MCF 10A (cell line): ENCODE measurements at regions of chr14 and their contacts with region 1.

Region 1: DNA sequence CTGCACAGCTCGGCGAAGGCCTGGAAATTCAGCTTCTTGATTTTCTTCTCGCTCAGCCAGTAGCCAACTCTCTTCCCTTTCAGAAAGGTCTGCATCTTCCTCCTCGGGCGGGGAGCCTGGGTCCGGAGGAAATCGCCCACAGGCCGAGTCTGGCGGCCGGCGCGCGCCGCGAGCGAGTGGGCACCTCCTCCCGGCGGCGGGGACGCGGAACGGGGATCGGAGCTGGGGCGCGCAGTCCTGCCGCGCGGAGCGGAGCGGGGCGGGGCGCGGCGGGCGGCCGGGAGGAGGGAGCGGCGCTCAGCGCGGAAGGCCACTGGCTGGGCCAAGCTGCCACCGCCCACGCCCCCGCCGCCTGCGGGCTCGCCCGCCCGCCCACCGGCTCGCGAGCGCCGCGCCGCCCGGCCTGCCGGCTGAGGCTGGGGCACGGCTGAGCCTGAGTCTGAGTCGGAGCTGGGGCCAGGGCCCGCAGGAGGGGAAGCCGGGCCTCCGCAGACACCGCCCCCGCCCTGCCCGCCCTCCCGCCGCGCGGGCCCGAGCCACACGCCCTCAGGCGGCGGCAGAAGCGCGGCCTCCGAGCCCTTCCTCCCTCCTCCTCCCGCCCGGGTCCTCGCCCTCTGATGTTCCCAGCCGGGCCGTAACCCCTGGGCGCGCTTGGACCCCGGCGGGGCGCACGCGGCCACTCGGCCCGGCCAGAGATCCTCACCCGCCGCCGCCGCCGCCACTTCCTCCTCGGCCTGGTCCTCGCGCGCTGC is 480 bp downstream of the ITPK1 start:
- DNase-seq: peak; percentile 82
- H3K4me3 Mint-ChIP-seq: peak overlapping the region; percentile 84
- H3K27ac Mint-ChIP-seq: no peak overlapping the region
- H3K4me1 Mint-ChIP-seq: peaks cover 19% of the 10 kb centered on the region
- H3K27me3 Mint-ChIP-seq: no peaks in the 10 kb centered on the region
- CTCF ChIP-seq: no peak

Region 2: GRCh38 chr14:92951912-92952471 is 163.3 kb before region 1 on chr14:
- CTCF ChIA-PET with region 1: interaction called, 74 read pairs
- POLR2A ChIA-PET with region 1: interaction called, 4 read pairs
- intact Hi-C with region 1: loop called (anchors 1 kb)
- DNase-seq: peak; percentile 62
- H3K4me3 Mint-ChIP-seq: no peak overlapping the region
- H3K27ac Mint-ChIP-seq: no peak overlapping the region
- H3K4me1 Mint-ChIP-seq: peaks cover 8% of the 10 kb centered on the region
- H3K27me3 Mint-ChIP-seq: no peaks in the 10 kb centered on the region
- CTCF ChIP-seq: peak; percentile 90

Region 3: DNA sequence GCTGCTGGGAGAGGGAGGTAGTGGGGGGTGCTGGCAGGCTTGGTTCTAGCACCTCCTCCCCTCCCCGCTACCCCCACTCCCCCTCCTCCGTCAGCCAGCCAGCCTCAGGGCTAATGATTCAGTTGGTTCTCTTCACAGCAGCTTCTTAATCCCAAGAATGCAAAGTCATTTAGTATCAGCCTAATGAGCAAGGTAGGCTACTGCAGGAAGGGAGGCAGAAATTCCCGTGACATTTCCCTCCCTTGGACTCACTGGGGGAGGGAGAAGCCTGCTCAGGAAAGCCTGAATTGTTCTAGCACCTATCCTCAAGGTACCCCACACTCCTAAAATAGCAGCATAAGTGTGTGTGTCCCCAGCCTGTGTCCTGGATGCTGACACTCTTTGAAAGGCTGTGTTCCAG is 29.3 kb before region 1 on chr14:
- CTCF ChIA-PET with region 1: interaction called, 17 read pairs
- POLR2A ChIA-PET with region 1: no interaction called
- intact Hi-C with region 1: no loop called
- DNase-seq: peak; percentile 57
- H3K4me3 Mint-ChIP-seq: no peak overlapping the region
- H3K27ac Mint-ChIP-seq: peak overlapping the region; percentile 77
- H3K4me1 Mint-ChIP-seq: peaks cover 34% of the 10 kb centered on the region
- H3K27me3 Mint-ChIP-seq: no peaks in the 10 kb centered on the region
- CTCF ChIP-seq: no peak

Region 4: DNA sequence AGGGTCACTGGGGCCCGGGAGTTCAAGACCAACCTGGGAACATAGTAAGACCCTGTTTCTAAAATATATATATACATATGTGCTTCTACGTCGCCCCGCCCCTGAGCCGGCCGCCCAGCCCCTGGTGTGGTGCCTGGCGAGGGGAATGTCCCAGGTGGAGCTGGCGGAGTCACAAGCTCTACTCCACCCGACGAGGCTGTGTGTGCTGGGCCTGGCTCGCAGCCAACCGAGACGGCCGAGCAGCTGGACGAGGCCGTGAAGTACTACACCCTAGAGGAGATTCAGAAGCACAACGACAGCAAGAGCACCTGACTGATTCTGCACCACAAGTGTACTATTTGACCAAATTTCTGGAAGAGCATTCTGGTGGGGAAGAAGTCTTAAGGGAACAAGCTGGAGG is 22.6 kb after region 1 on chr14:
- CTCF ChIA-PET with region 1: interaction called, 336 read pairs
- POLR2A ChIA-PET with region 1: interaction called, 117 read pairs
- intact Hi-C with region 1: loop called (anchors 1 kb)
- DNase-seq: peak; percentile 58
- H3K4me3 Mint-ChIP-seq: no peak overlapping the region
- H3K27ac Mint-ChIP-seq: no peak overlapping the region
- H3K4me1 Mint-ChIP-seq: peaks cover 22% of the 10 kb centered on the region
- H3K27me3 Mint-ChIP-seq: no peaks in the 10 kb centered on the region
- CTCF ChIP-seq: no peak

Region 5: GRCh38 chr14:93184388-93185353 is 69.4 kb after region 1 on chr14 and contains the starts of genes LYSET and MOAP1:
- CTCF ChIA-PET with region 1: interaction called, 61 read pairs
- POLR2A ChIA-PET with region 1: interaction called, 27 read pairs
- intact Hi-C with region 1: no loop called
- DNase-seq: peak; percentile 79
- H3K4me3 Mint-ChIP-seq: peak within 1 kb of the TSS; percentile 88
- H3K27ac Mint-ChIP-seq: peak within 1 kb of the TSS; percentile 84
- H3K4me1 Mint-ChIP-seq: peaks cover 15% of the 10 kb centered on the region
- H3K27me3 Mint-ChIP-seq: no peaks in the 10 kb centered on the region
- CTCF ChIP-seq: no peak
- total RNA-seq, gene LYSET: 14.3 and 15.4 TPM in 2 replicates
- total RNA-seq, gene MOAP1: 17.5 and 22.1 TPM in 2 replicates

Region 6: DNA sequence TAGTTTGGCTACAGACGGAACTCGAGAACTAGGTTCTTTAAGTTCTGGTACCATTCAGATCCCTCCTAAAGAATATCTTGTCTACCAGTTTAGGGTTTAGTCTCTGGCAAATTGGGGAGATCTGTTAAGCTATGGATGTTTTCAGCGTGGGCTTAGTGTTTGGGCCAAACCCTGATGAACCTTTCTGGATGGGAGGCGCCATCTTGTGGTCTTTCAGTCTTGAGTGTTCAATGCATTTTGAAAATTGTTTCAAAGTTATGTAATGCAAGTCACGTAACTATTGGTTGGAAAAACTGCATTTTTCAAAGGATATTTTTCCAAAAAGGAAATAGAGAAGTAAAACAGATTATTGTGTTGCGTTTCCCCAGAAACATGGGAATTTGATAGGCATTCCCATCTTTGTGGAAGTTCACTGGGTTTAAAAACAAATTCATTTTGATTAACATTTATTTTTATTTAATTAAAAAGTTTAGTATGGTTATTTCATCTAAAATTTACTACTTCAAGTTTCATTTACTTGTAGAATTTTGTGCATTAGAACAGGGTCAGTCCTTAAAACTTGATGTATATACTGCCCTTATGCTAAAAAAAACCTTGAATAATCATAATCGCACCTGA is 504.0 kb after region 1 on chr14:
- CTCF ChIA-PET with region 1: interaction called, 3 read pairs
- POLR2A ChIA-PET with region 1: no interaction called
- intact Hi-C with region 1: loop called (anchors 2 kb)
- DNase-seq: peak; percentile 56
- H3K4me3 Mint-ChIP-seq: no peak overlapping the region
- H3K27ac Mint-ChIP-seq: no peak overlapping the region
- H3K4me1 Mint-ChIP-seq: no peaks in the 10 kb centered on the region
- H3K27me3 Mint-ChIP-seq: peaks cover 45% of the 10 kb centered on the region
- CTCF ChIP-seq: peak; percentile 50